Endothelial cell of umbilical vein (primary cell): ENCODE measurements at regions of chr9 and their contacts with region 1.

Region 1: DNA sequence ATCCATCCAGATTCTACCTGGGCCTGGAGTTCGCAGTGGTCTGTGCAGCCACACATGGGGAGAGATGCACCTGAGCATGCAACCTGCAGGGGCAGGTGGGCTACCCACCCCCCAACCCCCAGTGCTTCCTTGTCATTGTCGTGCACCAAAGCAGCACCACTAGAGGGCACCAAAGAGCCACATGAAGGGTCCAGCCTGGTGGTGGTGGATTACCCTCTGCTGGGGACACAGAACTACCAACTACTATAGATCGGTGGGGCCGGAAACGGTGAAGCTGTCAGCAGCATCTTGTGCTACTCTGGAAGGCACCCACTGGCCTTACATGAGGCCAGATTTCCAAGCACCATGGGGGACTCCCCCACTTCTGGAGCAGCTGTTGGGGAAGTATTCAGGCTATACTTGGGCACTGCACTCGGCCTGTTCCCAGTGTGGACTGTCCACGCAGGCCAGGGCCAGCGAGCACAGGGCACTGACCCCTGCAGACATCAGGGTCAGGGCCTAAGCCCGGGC is 60.2 kb upstream of the TBC1D2 start:
- DNase-seq: peak; percentile 82
- H3K4me3 ChIP-seq: no peak overlapping the region
- H3K27ac ChIP-seq: no peak overlapping the region
- H3K4me1 ChIP-seq: peaks cover 16% of the 10 kb centered on the region
- H3K27me3 ChIP-seq: no peaks in the 10 kb centered on the region
- CTCF ChIP-seq: peak; percentile 91 to 93
- POLR2A ChIP-seq: no peak

Region 2: GRCh38 chr9:98333703-98334582 is 18.3 kb after region 1 on chr9:
- CTCF ChIA-PET with region 1: interaction called, 6 read pairs
- POLR2A ChIA-PET with region 1: no interaction called
- dilution Hi-C with region 1: no loop called
- intact Hi-C with region 1: loop called (anchors 1 kb)
- DNase-seq: peak; percentile 94
- H3K4me3 ChIP-seq: no peak overlapping the region
- H3K27ac ChIP-seq: peak overlapping the region; percentile 98
- H3K4me1 ChIP-seq: peaks cover 41% of the 10 kb centered on the region
- H3K27me3 ChIP-seq: no peaks in the 10 kb centered on the region
- CTCF ChIP-seq: no peak
- POLR2A ChIP-seq: peak; percentile 80

Region 3: DNA sequence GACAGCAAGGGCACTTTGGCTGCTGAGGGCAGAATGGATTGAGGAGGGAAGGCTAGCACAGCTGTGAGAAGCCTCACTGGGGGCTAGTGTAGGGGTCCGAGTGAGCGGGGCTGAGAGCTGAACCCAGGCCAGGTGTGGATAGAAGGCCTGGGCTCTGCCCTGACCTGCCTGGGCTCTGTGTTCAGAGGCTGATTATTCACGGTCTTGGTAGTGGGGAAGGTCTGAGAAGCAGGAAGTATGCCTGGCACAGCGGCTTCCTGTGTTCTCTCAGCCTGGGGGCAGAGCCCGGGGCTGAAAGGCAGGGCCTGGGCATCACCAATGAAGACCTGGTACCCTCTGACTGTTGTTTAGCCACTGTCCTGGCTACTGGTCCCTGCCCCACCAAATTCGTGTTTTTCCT is 76.3 kb after region 1 on chr9:
- CTCF ChIA-PET with region 1: no interaction called
- POLR2A ChIA-PET with region 1: no interaction called
- dilution Hi-C with region 1: no loop called
- intact Hi-C with region 1: no loop called
- DNase-seq: peak; percentile 16
- H3K4me3 ChIP-seq: no peak overlapping the region
- H3K27ac ChIP-seq: no peak overlapping the region
- H3K4me1 ChIP-seq: peaks cover 5% of the 10 kb centered on the region
- H3K27me3 ChIP-seq: no peaks in the 10 kb centered on the region
- CTCF ChIP-seq: no peak
- POLR2A ChIP-seq: no peak

Region 4: GRCh38 chr9:98410185-98410697 is 94.6 kb after region 1 on chr9:
- CTCF ChIA-PET with region 1: interaction called, 18 read pairs
- POLR2A ChIA-PET with region 1: no interaction called
- dilution Hi-C with region 1: no loop called
- intact Hi-C with region 1: loop called (anchors 1 kb)
- DNase-seq: peak; percentile 55
- H3K4me3 ChIP-seq: no peak overlapping the region
- H3K27ac ChIP-seq: no peak overlapping the region
- H3K4me1 ChIP-seq: peaks cover 13% of the 10 kb centered on the region
- H3K27me3 ChIP-seq: no peaks in the 10 kb centered on the region
- CTCF ChIP-seq: peak in 1 of 2 donors; percentile 38
- POLR2A ChIP-seq: no peak

Region 5: GRCh38 chr9:98465799-98466198 is 150.2 kb after region 1 on chr9:
- CTCF ChIA-PET with region 1: no interaction called
- POLR2A ChIA-PET with region 1: no interaction called
- dilution Hi-C with region 1: no loop called
- intact Hi-C with region 1: no loop called
- DNase-seq: no peak
- H3K4me3 ChIP-seq: no peak overlapping the region
- H3K27ac ChIP-seq: no peak overlapping the region
- H3K4me1 ChIP-seq: no peaks in the 10 kb centered on the region
- H3K27me3 ChIP-seq: no peaks in the 10 kb centered on the region
- CTCF ChIP-seq: no peak
- POLR2A ChIP-seq: no peak

Region 6: GRCh38 chr9:98506422-98507054 is 190.9 kb after region 1 on chr9:
- CTCF ChIA-PET with region 1: no interaction called
- POLR2A ChIA-PET with region 1: no interaction called
- dilution Hi-C with region 1: no loop called
- intact Hi-C with region 1: no loop called
- DNase-seq: no peak
- H3K4me3 ChIP-seq: no peak overlapping the region
- H3K27ac ChIP-seq: no peak overlapping the region
- H3K4me1 ChIP-seq: no peaks in the 10 kb centered on the region
- H3K27me3 ChIP-seq: no peaks in the 10 kb centered on the region
- CTCF ChIP-seq: no peak
- POLR2A ChIP-seq: no peak

Region 7: GRCh38 chr9:98607787-98608186 is 292.2 kb after region 1 on chr9:
- CTCF ChIA-PET with region 1: interaction called, 4 read pairs
- POLR2A ChIA-PET with region 1: no interaction called
- dilution Hi-C with region 1: no loop called
- intact Hi-C with region 1: loop called (anchors 5 kb)
- DNase-seq: peak; percentile 91
- H3K4me3 ChIP-seq: peak overlapping the region in 1 of 3 experiments; percentile 26
- H3K27ac ChIP-seq: peak overlapping the region; percentile 97
- H3K4me1 ChIP-seq: peaks cover 30% of the 10 kb centered on the region
- H3K27me3 ChIP-seq: no peaks in the 10 kb centered on the region
- CTCF ChIP-seq: no peak
- POLR2A ChIP-seq: no peak

Region 8: DNA sequence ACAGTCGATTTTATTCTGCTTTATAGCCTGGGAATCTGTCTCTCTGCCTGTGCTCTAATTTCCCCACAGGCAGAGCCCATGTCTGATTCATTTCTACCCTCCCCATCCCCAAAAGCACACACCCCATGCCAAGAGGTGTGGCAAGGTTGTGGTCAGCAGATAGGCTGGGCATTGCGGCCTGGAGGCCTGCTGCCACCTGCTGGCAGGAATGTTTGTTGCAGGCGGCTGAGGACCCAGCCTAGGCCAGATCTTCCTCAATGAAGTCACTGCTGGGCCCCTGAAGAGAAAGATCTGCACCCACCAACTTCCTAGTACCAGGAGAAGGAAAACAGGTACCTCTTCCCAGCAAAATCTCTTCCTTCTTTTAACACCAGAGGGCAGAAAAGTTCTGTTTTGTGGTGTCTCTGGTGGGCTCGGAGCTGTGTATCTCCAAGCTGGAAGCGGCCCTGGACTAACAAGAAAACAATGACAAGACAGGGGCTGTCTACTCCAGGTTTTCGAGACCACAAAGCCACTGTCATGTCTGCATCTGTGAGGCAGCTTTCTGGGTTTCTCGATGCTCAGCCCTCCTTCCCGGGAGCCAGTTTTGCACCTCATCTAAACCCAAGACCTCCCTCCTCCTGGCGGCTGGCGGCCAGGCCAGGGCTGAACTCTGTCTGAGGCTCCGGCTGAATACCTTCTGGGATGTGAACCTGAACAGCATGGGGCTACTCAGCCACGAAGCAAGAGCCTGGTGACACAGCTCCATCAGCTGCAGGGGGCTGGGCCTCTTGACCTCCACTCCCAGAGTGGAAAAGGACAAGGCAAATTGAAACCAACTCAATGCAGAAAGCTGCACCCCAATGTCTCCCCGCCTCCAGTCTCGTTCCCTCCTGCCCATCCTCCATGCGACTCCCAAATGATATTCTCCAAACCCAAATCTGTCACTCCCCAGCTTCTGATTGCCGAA is 475.8 kb after region 1 on chr9:
- CTCF ChIA-PET with region 1: interaction called, 4 read pairs
- POLR2A ChIA-PET with region 1: no interaction called
- dilution Hi-C with region 1: no loop called
- intact Hi-C with region 1: loop called (anchors 1 kb)
- DNase-seq: peak; percentile 80
- H3K4me3 ChIP-seq: no peak overlapping the region
- H3K27ac ChIP-seq: no peak overlapping the region
- H3K4me1 ChIP-seq: peaks cover 16% of the 10 kb centered on the region
- H3K27me3 ChIP-seq: no peaks in the 10 kb centered on the region
- CTCF ChIP-seq: peak; percentile 96 to 98
- POLR2A ChIP-seq: no peak

Region 9: GRCh38 chr9:98998441-98999151 is 683.0 kb after region 1 on chr9:
- CTCF ChIA-PET with region 1: no interaction called
- POLR2A ChIA-PET with region 1: no interaction called
- dilution Hi-C with region 1: no loop called
- intact Hi-C with region 1: loop called (anchors 2 kb)
- DNase-seq: peak; percentile 50
- H3K4me3 ChIP-seq: no peak overlapping the region
- H3K27ac ChIP-seq: no peak overlapping the region
- H3K4me1 ChIP-seq: no peaks in the 10 kb centered on the region
- H3K27me3 ChIP-seq: peaks cover 0 to 10% of the 10 kb centered on the region in 2 experiments
- CTCF ChIP-seq: peak; percentile 77 to 90
- POLR2A ChIP-seq: no peak